Ascending aorta (tissue), 2 donors: ENCODE measurements at regions of chr16 and their contacts with region 1.

Region 1: GRCh38 chr16:15949210-15950160 is at the start of gene ABCC1:
- DNase-seq: no peak
- H3K4me3 ChIP-seq: peak within 1 kb of the TSS; percentile 74 to 87
- H3K27ac ChIP-seq: peak within 1 kb of the TSS; percentile 86 to 93
- H3K4me1 ChIP-seq: peaks cover 10 to 37% of the 10 kb centered on the region in 2 donors
- H3K27me3 ChIP-seq: no peaks in the 10 kb centered on the region
- CTCF ChIP-seq: peak in 1 of 3 experiments; percentile 13
- total RNA-seq, gene ABCC1: 144 TPM

Region 2: DNA sequence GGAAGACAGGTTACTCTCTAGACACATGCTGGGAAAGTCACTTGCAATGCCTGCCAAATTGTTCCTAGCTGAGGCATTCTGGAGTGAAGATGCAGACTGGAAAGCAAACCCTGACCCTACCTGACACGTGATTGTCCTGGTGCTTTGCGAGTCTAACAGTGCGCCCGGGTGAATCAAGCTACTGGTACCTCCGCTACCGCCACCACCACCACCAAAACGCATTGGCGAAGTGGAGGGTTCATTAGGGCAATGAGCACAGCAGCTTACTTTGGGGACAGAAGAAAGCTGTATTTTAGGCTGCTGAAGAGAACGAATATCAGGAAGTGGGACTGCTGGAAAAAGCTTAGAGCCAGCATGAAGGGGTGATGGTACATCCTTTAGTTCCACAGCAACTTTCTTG is 313.6 kb before region 1 on chr16:
- intact Hi-C with region 1: no loop called
- DNase-seq: no peak
- H3K4me3 ChIP-seq: no peak overlapping the region
- H3K27ac ChIP-seq: no peak overlapping the region
- H3K4me1 ChIP-seq: no peaks in the 10 kb centered on the region
- H3K27me3 ChIP-seq: no peaks in the 10 kb centered on the region
- CTCF ChIP-seq: no peak

Region 3: DNA sequence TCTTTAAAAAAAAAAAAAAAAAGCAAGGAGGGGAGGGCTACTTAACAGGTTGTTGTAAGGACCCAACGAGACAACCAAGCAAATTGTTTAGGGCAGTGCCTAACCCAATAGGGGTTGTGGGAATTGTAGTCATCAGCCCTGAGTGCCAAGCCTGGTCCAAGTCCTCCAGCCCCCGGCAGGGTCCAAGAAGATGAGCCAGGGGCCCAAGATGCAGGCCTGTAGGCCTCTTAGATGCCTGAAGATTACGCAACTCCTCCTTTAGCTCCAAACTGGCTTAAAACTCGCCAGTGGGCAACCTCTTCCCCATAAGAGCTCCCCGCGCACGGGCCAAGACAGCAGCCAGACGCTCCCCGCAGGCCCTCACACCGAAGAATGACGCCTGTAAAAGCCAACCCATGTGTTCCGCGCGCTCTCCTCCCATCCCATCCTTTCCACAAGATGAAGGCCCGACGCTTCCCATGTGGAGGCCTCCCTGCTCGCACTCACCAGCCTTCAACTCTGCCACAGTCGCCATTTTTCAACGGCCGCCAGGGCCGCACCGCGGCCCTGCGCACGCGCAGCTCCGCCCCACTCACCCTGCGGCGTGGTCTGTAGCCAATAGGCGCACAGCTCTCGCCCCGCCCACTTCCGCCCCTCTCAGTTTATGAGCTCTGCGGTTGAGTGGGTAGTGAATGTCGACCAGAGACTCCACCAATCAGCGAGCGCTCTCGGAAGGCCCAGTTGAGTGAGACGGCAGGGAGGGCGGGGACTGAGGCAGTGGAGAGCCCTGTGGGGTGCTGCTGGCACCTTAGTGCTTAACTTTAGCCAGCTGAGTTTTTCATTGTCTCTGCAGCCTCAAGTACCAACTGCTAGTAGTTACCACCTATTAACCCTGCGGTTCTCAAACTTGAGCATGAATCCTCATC is 61.2 kb before region 1 on chr16 and contains the start of gene CEP20:
- intact Hi-C with region 1: loop called (anchors 2 kb)
- DNase-seq: peak; percentile 99 to 100
- H3K4me3 ChIP-seq: peak within 1 kb of the TSS; percentile 81 to 87
- H3K27ac ChIP-seq: peak within 1 kb of the TSS; percentile 79 to 93
- H3K4me1 ChIP-seq: peaks cover 0 to 11% of the 10 kb centered on the region in 2 donors
- H3K27me3 ChIP-seq: no peaks in the 10 kb centered on the region
- CTCF ChIP-seq: peak; percentile 11 to 55 (median 18)
- total RNA-seq, gene CEP20: 7.6 TPM

Region 4: DNA sequence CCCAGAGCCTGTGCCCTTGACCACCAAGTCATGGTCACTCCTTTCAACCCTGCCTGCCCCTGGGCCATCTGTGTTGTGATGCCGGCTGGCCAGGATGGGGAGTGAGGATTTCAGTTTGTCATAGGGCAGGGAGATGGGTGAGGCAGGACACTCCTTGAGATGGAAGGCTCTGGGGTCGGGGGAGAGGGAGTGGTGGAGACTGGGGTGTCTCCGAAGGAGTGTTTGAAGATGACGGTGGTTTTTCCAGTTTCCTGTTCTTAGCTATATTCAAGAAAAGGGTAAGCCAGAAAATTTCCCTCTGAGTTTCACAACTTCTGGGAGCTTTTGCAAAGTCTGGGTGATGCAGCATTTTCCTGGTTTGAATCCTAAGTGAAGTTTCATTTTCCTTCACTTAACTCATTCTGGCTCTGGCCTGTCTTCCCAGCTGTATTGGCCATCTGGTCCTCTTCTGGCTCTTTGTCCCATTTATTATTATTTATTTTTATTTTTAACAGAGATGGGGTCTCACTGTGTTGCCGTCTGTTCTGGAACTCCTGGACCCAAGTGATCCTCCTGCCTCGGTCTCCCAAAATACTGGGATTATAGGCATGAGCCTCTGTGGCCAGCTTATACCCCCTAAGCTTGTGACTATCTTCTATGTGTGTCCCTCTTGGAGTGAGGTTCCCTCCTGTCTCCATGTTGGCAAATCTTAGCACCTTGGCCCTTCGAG is 27.6 kb after region 1 on chr16:
- intact Hi-C with region 1: loop called (anchors 2 kb)
- DNase-seq: peak in 1 of 2 donors; percentile 82
- H3K4me3 ChIP-seq: peak overlapping the region in 1 of 2 donors; percentile 14
- H3K27ac ChIP-seq: peak overlapping the region; percentile 94 to 97
- H3K4me1 ChIP-seq: peaks cover 28 to 66% of the 10 kb centered on the region in 2 donors
- H3K27me3 ChIP-seq: no peaks in the 10 kb centered on the region
- CTCF ChIP-seq: no peak

Region 5: DNA sequence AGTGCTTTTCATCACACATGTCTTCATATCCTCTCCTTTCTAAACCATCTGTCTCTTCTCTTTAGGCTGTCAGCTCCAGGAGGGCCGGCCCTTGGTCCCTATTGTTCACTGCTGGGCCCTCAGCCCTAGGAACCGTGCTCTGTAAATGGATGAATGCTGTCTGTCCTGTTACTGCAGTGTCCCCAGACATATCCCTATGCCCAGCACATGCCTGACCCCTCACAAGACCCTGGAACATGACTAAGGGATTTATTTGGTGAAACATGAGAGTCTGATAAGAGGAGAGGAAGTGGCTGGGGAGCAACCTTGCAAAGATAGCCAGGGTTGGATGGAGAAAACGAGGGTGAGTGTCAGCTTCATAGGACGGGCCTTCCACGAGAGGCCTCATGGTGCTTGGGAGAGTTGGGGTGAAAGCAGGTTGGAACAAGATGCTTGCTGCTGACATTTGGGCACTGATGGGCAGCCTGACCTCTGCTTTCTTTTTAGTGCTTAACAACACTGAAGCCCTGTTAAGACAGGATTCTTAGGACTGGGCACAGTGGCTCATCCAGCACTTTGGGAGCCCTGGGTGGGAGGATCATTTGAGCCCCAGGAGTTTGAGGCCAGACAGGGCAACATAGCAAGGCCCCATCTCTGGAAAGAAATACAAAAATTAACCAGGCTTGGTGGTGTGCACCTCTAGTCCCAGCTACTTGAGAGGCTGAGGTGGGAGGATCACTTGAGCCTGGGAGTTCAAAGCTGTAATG is 39.0 kb after region 1 on chr16:
- intact Hi-C with region 1: loop called (anchors 2 kb)
- DNase-seq: no peak
- H3K4me3 ChIP-seq: no peak overlapping the region
- H3K27ac ChIP-seq: peak overlapping the region; percentile 83
- H3K4me1 ChIP-seq: peaks cover 26 to 37% of the 10 kb centered on the region in 2 donors
- H3K27me3 ChIP-seq: no peaks in the 10 kb centered on the region
- CTCF ChIP-seq: no peak

Region 6: GRCh38 chr16:15996432-15997109 is 47.1 kb after region 1 on chr16:
- intact Hi-C with region 1: loop called (anchors 2 kb)
- DNase-seq: peak in 1 of 2 donors; percentile 82
- H3K4me3 ChIP-seq: no peak overlapping the region
- H3K27ac ChIP-seq: peak overlapping the region; percentile 63 to 82
- H3K4me1 ChIP-seq: peaks cover 18 to 63% of the 10 kb centered on the region in 2 donors
- H3K27me3 ChIP-seq: no peaks in the 10 kb centered on the region
- CTCF ChIP-seq: no peak

Region 7: DNA sequence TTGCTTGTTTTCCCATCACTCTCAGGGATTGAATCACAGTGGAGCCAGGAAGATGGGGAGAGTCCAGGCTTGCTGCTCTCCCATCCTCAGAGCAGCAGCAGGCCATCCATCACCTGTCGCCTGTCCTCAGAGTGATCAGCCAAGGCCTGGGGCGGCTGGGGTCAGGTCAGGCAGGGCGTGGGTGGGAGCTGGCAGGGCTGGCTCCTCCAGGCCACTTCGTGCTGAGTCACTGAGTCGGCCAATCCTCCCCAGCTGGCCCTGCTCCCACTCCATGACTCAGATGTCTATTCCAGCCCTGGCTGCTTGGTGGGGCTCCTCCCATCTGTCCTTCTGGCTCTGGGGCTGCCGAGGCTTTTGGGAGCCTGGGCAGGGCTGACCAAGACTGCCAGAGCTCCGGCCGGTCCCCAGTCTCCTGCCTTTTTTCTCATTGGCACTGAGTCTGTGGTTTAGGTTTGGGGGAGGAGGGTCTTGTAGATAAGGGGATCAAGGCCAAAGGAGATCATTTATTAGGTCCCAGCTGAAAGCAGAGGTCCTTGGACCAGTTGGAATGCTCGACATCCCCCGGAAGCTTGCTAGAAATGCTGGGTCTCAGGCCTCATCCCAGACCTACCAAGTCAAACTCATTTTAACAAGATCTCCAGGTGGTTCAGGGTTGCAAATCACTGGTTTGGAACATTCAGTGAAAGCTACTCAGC is 72.7 kb after region 1 on chr16:
- intact Hi-C with region 1: loop called (anchors 2 kb)
- DNase-seq: peak; percentile 89 to 99
- H3K4me3 ChIP-seq: peak overlapping the region in 1 of 2 donors; percentile 39
- H3K27ac ChIP-seq: peak overlapping the region; percentile 79 to 89
- H3K4me1 ChIP-seq: peaks cover 21 to 59% of the 10 kb centered on the region in 2 donors
- H3K27me3 ChIP-seq: no peaks in the 10 kb centered on the region
- CTCF ChIP-seq: no peak

Region 8: GRCh38 chr16:16073891-16074881 is 124.7 kb after region 1 on chr16:
- intact Hi-C with region 1: loop called (anchors 5 kb)
- DNase-seq: no peak
- H3K4me3 ChIP-seq: no peak overlapping the region
- H3K27ac ChIP-seq: peak overlapping the region; percentile 33 to 74
- H3K4me1 ChIP-seq: peaks cover 25 to 56% of the 10 kb centered on the region in 2 donors
- H3K27me3 ChIP-seq: no peaks in the 10 kb centered on the region
- CTCF ChIP-seq: no peak